ENCODE measurements at regions of chr1 and their contacts with region 1.

Region 1: DNA sequence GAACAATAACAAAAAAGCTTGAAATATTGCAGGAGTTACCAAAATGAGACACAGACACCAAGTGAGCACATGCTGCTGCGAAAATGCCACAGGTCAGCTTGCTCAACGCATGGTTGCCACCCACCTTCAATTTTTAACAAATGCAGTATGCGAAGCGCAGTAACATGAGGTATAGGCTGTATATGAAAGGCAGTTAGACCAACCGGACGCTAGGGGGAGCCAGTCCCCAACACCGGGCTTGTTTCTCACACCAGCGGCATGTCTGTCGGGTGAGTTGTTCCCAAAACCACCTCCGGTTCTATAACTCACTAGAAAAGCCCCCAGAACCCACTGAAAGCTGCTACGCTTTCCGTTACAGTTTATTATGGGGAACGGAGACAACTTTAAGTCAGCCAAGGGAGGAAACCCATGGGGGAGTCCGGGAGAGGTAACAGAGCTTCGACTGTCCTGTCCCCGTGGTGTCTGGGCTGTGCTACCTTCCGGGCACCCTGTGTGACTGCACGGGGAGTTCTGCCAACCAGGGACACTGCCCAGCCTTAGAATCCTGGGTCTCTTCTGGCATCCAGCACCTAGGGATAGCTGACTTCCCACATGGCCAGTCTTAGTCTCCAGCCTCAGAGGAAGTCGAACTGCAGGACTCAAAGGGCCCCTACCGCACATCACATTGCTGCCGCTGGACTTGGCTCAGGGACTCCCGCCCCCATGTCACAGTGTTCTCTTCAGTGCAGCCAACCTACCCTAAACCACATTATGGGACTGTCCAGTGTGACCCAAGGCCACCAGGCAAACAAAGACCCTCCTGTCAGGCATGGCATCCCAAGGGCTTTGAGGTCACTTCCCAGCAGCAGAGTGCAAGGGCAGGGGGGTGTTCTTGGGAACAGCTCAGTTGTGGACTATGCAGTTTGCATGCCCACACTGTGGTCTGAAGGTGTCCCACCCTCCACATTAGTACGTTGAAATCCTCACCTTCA is 14.0 kb downstream of the RNF187 start:
- DNase-seq: peak; percentile 78
- ATAC-seq: peak; percentile 98
- H3K4me3 ChIP-seq: no peak overlapping the region
- H3K27ac ChIP-seq: peak overlapping the region; percentile 52
- H3K4me1 ChIP-seq: peaks cover 19% of the 10 kb centered on the region
- H3K27me3 ChIP-seq: no peaks in the 10 kb centered on the region
- CTCF ChIP-seq: peak; percentile 91 to 96 (median 92)
- EP300 ChIP-seq: no peak
- POLR2A ChIP-seq: peak; percentile 3; the same call in 1 of the 2 replicates
- RAD21 ChIP-seq: peak; percentile 77

Region 2: GRCh38 chr1:228387321-228387720 is 113.9 kb before region 1 on chr1:
- CTCF ChIA-PET with region 1: no interaction called
- POLR2A ChIA-PET with region 1: no interaction called
- RAD21 ChIA-PET with region 1: no interaction called
- SMC1A ChIA-PET with region 1: no interaction called
- in situ Hi-C with region 1: no loop called
- intact Hi-C with region 1: no loop called
- DNase-seq: no peak
- ATAC-seq: no peak
- H3K4me3 ChIP-seq: no peak overlapping the region
- H3K27ac ChIP-seq: no peak overlapping the region
- H3K4me1 ChIP-seq: no peaks in the 10 kb centered on the region
- H3K27me3 ChIP-seq: no peaks in the 10 kb centered on the region; a peak in 1 of 4 replicates
- CTCF ChIP-seq: no peak
- EP300 ChIP-seq: no peak
- POLR2A ChIP-seq: no peak
- RAD21 ChIP-seq: no peak

Region 3: DNA sequence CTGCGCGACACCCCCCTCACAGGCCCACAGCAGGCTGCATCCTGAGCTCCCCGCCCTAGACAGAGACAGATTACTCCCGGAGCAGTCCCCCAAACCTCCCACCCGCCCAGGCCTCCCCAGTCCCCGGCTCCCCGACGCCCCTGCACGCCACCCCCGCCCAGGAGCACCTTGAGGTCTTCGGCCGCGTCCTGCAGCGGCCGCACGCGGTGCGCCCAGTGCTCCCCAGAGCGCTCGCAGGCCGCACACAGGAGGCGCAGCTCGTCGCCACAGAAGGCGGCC is 95.3 kb before region 1 on chr1:
- CTCF ChIA-PET with region 1: no interaction called
- POLR2A ChIA-PET with region 1: no interaction called
- RAD21 ChIA-PET with region 1: no interaction called
- SMC1A ChIA-PET with region 1: no interaction called
- in situ Hi-C with region 1: no loop called
- intact Hi-C with region 1: no loop called
- DNase-seq: no peak
- ATAC-seq: peak; percentile 44
- H3K4me3 ChIP-seq: peak overlapping the region; percentile 97
- H3K27ac ChIP-seq: peak overlapping the region; percentile 86
- H3K4me1 ChIP-seq: peaks cover 4% of the 10 kb centered on the region; the same call in 1 of the 2 replicates
- H3K27me3 ChIP-seq: no peaks in the 10 kb centered on the region
- CTCF ChIP-seq: no peak
- EP300 ChIP-seq: no peak
- POLR2A ChIP-seq: no peak
- RAD21 ChIP-seq: no peak

Region 4: DNA sequence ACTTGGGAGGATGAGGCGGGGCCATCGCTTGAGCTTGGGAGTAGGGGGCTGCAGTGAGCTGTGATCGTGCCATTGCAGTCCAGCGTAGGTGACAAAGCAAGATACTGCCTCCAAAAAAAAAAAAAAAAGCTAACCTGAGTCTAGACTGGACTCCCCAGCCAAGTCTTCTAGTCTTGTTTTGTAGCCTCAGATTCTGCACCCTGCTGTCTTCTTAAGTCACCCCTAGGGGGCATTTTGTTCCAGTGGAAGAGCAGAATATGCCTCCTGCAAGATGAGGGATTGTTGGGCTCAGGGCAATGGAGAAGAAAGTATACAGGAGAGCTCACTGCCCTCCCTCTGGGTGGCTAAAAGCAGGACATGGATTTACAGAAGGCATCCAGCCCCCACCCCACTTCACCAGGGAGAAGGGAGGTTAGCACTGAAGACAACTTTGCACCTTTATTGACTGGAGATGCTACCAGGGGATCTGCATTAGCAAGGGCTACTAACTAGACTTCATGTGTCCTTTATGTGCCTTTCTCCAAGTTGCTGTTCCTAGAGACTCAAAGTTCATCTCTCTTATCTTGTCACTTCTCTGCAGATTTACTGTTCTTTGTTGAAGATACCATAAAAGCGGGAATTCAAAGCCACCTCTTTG is 29.3 kb before region 1 on chr1:
- CTCF ChIA-PET with region 1: interaction called, 17 read pairs
- POLR2A ChIA-PET with region 1: no interaction called
- RAD21 ChIA-PET with region 1: no interaction called
- SMC1A ChIA-PET with region 1: no interaction called
- in situ Hi-C with region 1: no loop called
- intact Hi-C with region 1: no loop called
- DNase-seq: no peak
- ATAC-seq: peak; percentile 92
- H3K4me3 ChIP-seq: no peak overlapping the region
- H3K27ac ChIP-seq: no peak overlapping the region
- H3K4me1 ChIP-seq: peaks cover 5% of the 10 kb centered on the region; the same call in 1 of the 2 replicates
- H3K27me3 ChIP-seq: peaks cover 0 to 3% of the 10 kb centered on the region in 2 experiments; a peak in 2 of 4 replicates
- CTCF ChIP-seq: peak; percentile 43 to 69 (median 64)
- EP300 ChIP-seq: no peak
- POLR2A ChIP-seq: no peak
- RAD21 ChIP-seq: peak; percentile 74

Region 5: DNA sequence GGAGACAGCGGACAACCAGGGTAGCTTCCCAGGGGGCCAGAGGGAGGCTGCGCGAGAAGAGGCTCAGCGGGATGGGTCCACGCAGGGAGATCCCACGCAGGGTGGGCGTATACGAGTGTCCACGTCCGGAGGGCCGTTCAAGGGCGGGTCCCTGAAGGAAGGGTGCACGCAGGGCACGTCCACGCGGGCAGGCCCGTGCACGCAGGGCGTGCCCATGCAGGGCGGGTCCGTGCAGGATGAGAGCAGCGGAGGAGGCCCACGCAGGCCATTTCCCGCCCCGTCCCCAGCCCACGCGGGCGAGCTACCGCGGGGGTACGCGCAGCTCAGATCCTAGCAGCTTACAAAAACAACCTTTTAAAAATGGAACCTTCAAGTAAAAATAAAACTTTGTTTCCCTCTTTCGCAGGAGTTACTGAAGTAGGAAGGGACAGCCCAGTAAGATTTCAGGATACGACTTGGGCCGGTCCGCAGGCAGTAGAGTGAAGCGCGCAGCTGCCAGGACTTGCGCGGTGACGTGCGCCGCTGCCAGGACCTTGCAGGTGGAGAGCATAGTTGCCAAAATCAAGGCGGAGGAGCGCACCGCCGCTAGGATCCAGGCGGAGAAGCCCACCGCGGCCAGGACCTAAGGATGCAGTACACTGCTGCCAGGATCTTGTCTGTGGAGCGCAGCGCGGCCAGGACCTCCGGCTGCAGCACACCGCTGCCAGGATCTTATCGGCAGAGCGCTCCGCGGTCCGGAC is 14.4 kb before region 1 on chr1:
- CTCF ChIA-PET with region 1: interaction called, 24 read pairs
- POLR2A ChIA-PET with region 1: interaction called, 4 read pairs
- RAD21 ChIA-PET with region 1: interaction called, 4 read pairs
- SMC1A ChIA-PET with region 1: interaction called, 8 read pairs
- in situ Hi-C with region 1: no loop called
- intact Hi-C with region 1: no loop called
- DNase-seq: peak; percentile 71
- ATAC-seq: peak; percentile 81
- H3K4me3 ChIP-seq: peak overlapping the region; percentile 76
- H3K27ac ChIP-seq: peak overlapping the region; percentile 95
- H3K4me1 ChIP-seq: peaks cover 28% of the 10 kb centered on the region
- H3K27me3 ChIP-seq: no peaks in the 10 kb centered on the region
- CTCF ChIP-seq: no peak
- EP300 ChIP-seq: peak; percentile 42 to 79; a peak in 1 of 4 replicates
- POLR2A ChIP-seq: peak; percentile 82
- RAD21 ChIP-seq: no peak

Region 6: DNA sequence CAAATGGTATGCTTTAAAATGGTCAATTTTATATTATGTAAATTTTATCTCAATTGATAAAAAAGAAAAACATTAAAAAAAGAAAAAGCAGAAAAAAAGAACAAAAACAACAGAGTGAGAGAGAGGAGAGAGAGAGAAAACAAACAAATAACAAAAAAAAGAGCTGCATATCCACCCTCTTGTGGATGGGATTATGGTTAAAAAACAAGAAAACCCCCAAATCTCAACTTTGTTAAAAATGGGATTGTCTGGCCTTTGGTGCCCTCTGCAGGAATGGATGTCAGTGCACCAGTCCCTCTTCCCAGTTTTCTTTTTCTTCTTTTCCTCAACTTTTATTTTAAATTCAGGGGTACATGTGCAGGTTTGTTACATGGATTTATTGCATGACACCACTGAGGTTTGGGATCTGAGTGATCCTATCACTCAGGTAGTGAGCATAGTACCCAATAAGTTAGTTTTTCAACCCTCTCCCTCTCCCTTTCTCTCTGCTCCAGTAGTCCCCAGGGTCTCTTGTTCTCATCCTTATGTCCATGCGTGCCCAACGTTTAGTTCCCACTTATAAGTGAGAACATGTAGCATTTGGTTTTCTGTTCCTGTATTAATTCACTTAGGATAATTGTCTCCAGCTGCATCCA is 14.1 kb after region 1 on chr1:
- CTCF ChIA-PET with region 1: interaction called, 15 read pairs
- POLR2A ChIA-PET with region 1: no interaction called
- RAD21 ChIA-PET with region 1: interaction called, 3 read pairs
- SMC1A ChIA-PET with region 1: interaction called, 10 read pairs
- in situ Hi-C with region 1: no loop called
- intact Hi-C with region 1: no loop called
- DNase-seq: no peak
- ATAC-seq: peak; percentile 51; the same call in 2 of the 3 replicates
- H3K4me3 ChIP-seq: no peak overlapping the region
- H3K27ac ChIP-seq: no peak overlapping the region
- H3K4me1 ChIP-seq: no peaks in the 10 kb centered on the region
- H3K27me3 ChIP-seq: no peaks in the 10 kb centered on the region; a peak in 3 of 4 replicates
- CTCF ChIP-seq: peak; percentile 50 to 69 (median 55); a peak in 4 of 6 replicates
- EP300 ChIP-seq: no peak
- POLR2A ChIP-seq: no peak
- RAD21 ChIP-seq: peak; percentile 77